ENCODE measurements at regions of chr3 and their contacts with region 1.

Region 1: DNA sequence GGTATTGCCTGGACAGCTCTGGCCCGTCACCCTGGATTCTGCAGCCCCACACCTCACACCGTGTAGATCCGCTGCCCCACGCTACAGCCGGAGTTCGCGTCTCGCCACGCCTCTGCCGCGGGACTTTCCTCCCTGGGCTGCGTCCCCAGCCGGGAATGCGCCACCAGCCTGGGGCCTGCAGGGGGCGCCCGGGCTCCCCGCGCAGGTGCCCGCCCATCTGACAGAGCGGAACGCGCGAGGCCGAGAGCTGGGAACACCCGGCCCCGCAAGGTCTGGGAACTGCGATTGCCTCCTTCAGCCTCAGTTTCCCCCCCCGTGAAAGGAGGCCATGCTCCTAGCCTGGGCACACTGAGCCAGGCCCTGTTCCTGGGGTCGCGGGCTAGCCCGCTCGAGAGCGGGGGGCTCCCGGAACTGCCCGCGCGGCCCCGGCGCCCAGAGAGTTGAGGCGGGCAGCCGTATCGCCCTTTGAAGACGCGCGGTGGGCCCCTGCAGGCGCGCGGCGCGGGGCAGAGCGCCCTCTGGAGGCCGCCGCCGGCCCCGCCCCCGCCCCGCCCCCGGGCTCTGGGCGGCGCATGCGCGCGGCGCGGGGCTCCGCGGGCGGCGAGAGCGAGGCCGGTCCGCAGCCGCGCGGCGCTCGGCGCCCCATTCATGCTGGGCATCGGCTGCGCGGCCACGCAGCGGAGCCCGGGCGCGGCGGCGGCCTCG is at the start of gene PLXNA1:
- DNase-seq: no peak
- H3K4me3 ChIP-seq: peak within 1 kb of the TSS; percentile 85 to 94 (median 87)
- H3K27ac ChIP-seq: peak within 1 kb of the TSS; percentile 54 to 82
- H3K4me1 ChIP-seq: peaks cover 3 to 6% of the 10 kb centered on the region in 2 donors
- H3K27me3 ChIP-seq: no peaks in the 10 kb centered on the region
- CTCF ChIP-seq: peak; percentile 79 to 89 (median 86)
- POLR2A ChIP-seq: no peak
- total RNA-seq, gene PLXNA1: 21.3 to 32.2 (median 25.9) TPM

Region 2: DNA sequence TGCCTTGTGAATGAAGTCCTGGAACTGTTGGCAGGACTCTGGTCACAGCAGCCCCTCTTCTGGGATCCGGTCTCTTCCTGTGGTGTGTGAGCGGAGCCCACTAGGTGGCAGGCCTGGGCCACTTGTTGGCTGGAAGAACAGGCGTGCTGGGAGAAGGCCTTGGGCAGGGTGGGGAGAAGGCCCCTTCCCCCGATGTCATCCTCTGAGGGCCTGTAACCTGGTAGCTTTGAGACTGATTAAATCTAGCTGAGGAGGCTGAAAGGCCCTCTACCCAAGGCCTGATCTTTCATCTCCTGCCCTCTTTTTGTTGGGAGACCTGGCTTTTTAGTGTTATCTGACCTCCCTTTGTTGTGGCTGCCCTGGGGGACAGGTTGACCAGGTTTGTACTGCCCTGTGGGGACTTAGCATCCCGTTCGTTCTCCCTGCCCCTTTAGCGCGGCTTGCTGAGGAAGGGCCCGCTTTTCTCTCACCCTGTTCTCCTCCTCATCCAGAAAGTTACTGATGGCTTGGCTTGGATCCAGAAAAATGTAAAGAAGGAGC is 230.2 kb before region 1 on chr3:
- intact Hi-C with region 1: loop called (anchors 5 kb)
- DNase-seq: peak; percentile 72 to 79
- H3K4me3 ChIP-seq: no peak overlapping the region
- H3K27ac ChIP-seq: peak overlapping the region; percentile 53 to 76
- H3K4me1 ChIP-seq: no peaks in the 10 kb centered on the region
- H3K27me3 ChIP-seq: no peaks in the 10 kb centered on the region
- CTCF ChIP-seq: peak; percentile 50 to 87 (median 82)
- POLR2A ChIP-seq: no peak

Measured in breast epithelium (tissue), 4 donors.